ENCODE measurements at regions of chr17 and their contacts with region 1.

Region 1: GRCh38 chr17:37816950-37817349 is 72.1 kb upstream of the HNF1B start:
- DNase-seq: no peak
- ATAC-seq: no peak
- H3K4me3 Mint-ChIP-seq: no peak overlapping the region
- H3K27ac Mint-ChIP-seq: no peak overlapping the region; the same call in 1 of the 2 replicates
- H3K4me1 Mint-ChIP-seq: peaks cover 3% of the 10 kb centered on the region
- H3K27me3 Mint-ChIP-seq: no peaks in the 10 kb centered on the region
- CTCF ChIP-seq: no peak

Region 2: GRCh38 chr17:37701496-37701898 is 115.5 kb before region 1 on chr17:
- CTCF ChIA-PET with region 1: interaction called, 10 read pairs
- POLR2A ChIA-PET with region 1: no interaction called
- DNase-seq: peak; percentile 64
- ATAC-seq: peak; percentile 73
- H3K4me3 Mint-ChIP-seq: no peak overlapping the region
- H3K27ac Mint-ChIP-seq: no peak overlapping the region
- H3K4me1 Mint-ChIP-seq: no peaks in the 10 kb centered on the region
- H3K27me3 Mint-ChIP-seq: peaks cover 5% of the 10 kb centered on the region; the same call in 1 of the 2 replicates
- CTCF ChIP-seq: peak; percentile 59

Region 3: DNA sequence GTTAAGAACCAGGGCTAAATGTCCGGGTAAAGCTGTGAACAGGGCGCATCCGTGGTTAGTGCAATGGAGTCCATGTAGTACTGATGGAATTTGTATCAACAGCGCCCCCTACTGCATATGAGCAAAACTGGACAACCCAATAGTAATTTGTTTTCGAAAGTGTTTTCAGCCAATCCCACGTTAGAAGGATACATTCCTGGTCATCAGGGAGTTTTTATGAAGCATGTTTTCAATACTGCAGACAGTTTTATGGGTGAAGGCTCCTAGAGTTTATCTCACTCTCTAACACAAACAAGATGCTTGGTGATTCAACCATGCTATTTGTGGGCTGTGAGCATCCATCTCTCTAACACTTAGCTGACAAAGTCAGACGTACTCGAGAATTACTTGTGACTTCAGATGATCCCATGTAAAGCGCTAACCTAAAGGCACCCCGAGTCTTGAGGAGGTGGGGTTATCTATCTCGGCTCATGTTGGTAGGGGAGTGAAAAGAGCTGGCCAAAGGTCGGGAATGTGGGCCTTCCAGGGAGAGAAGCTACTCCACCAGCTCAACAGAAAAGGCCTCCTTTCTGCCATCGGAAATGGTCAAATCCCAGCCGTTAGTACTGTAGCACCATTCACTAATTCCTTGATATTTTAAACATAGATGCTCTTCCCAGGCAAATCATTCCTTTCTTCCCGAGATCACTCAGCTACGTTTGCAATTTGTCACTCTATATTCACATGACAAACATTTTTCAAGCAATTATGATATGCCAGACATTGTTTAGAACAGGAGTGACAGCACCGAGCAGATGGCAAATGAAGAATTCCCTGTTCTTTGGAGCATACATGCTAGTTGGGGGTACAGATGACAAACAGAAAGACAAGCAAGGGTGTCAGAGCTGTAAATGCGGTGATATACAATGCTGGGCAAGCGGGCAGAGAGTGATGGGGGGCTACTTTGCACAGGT is 25.2 kb before region 1 on chr17:
- CTCF ChIA-PET with region 1: interaction called, 27 read pairs
- POLR2A ChIA-PET with region 1: interaction called, 4 read pairs
- DNase-seq: peak; percentile 30
- ATAC-seq: peak; percentile 71
- H3K4me3 Mint-ChIP-seq: no peak overlapping the region
- H3K27ac Mint-ChIP-seq: no peak overlapping the region
- H3K4me1 Mint-ChIP-seq: no peaks in the 10 kb centered on the region; the same call in 1 of the 2 replicates
- H3K27me3 Mint-ChIP-seq: no peaks in the 10 kb centered on the region
- CTCF ChIP-seq: peak; percentile 73

Region 4: DNA sequence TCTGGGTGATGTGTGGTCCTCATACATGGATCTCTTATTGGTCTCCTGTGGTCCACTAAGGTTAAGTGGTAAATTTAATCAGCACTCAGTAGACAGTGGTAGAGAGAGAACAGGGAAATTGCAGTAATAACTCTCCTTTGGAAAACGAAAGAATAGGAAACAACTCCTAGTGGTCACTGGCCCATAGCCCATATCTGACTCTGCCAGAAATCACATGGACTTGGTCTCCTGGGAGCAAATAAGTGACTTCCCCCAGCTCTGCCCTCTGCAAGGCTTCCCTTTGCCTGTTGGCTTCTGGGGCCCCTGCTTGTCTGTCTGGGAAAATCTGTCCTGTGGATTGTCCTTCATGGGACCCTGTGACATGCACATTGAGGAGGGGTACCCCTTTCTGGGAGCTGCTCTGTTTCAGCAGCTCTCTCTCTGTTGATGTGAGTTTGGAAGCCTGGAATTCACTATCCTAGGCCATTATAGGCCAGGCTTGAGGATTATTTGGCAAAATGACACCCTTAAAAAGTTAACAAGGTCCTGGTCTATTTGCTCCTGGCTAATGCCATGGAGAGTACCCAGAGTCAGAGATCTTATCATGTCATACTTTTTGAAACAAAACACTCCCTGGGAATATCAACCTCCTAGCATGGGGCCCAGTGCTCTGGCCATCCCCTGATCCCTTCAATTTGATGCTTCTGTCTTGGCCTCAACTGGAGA is 14.1 kb before region 1 on chr17:
- CTCF ChIA-PET with region 1: interaction called, 10 read pairs
- POLR2A ChIA-PET with region 1: no interaction called
- DNase-seq: no peak
- ATAC-seq: no peak
- H3K4me3 Mint-ChIP-seq: no peak overlapping the region
- H3K27ac Mint-ChIP-seq: no peak overlapping the region
- H3K4me1 Mint-ChIP-seq: no peaks in the 10 kb centered on the region; the same call in 1 of the 2 replicates
- H3K27me3 Mint-ChIP-seq: no peaks in the 10 kb centered on the region
- CTCF ChIP-seq: no peak

Region 5: DNA sequence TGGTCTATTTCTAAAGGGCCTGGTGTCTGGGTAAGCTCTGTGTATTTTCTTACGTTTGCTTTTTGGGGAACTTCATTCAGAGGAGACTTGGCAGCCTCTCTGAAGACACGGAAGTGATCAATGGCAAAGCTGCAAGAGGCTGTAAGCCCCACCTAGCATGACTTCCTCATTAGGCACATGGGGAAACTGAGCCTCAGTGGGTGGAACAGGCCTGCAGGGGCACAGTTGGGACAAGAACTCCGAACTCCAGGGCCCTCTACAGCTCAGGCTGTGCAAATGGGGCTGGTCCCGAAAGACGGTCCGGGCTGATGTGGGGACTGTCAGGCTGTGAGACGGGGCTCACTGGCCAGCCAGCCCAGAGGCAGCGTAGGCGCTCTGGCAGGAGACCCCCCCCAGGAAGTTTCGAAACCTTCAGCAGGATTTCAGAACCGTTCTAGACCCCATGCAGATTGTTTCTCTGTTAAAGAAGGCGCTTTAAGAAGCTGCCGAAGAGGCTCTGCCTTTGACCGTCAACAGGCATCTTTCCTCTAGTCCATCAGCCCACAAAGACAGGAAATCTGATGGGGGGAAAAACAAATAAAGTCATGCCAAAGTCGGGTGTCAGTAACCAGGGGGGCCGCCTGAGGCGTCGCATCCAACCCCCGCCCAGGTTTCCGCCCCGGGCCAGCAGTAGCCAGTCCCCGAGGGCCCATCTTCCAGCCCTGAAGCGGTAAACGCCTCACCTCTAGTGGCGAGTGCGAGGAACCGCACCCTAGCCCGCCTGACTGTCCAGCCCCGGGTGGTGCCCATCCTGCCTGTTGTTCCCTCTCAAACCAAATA is 27.4 kb after region 1 on chr17:
- CTCF ChIA-PET with region 1: interaction called, 19 read pairs
- POLR2A ChIA-PET with region 1: no interaction called
- DNase-seq: peak; percentile 88
- ATAC-seq: peak; percentile 99
- H3K4me3 Mint-ChIP-seq: peak overlapping the region; percentile 62
- H3K27ac Mint-ChIP-seq: no peak overlapping the region
- H3K4me1 Mint-ChIP-seq: no peaks in the 10 kb centered on the region
- H3K27me3 Mint-ChIP-seq: peaks cover 2% of the 10 kb centered on the region; the same call in 1 of the 2 replicates
- CTCF ChIP-seq: peak; percentile 87

Measured in WTC11 (cell line).